Caco-2 (cell line): ENCODE measurements at regions of chr7 and their contacts with region 1.

Region 1: GRCh38 chr7:70693686-70694360 is 438.1 kb upstream of the GALNT17 start:
- DNase-seq: peak; percentile 82 to 84
- H3K4me3 ChIP-seq: peak overlapping the region; percentile 66
- H3K4me3 Mint-ChIP-seq: peak overlapping the region; percentile 85
- H3K27ac Mint-ChIP-seq: peak overlapping the region; percentile 48
- H3K4me1 ChIP-seq: peaks cover 8% of the 10 kb centered on the region; the same call in 1 of the 2 replicates
- H3K4me1 Mint-ChIP-seq: peaks cover 6% of the 10 kb centered on the region
- H3K27me3 ChIP-seq: no peaks in the 10 kb centered on the region
- H3K27me3 Mint-ChIP-seq: no peaks in the 10 kb centered on the region
- CTCF ChIP-seq: no peak

Region 2: GRCh38 chr7:70040970-70041766 is 652.7 kb before region 1 on chr7:
- CTCF ChIA-PET with region 1: interaction called, 6 read pairs
- POLR2A ChIA-PET with region 1: no interaction called
- intact Hi-C with region 1: loop called (anchors 1 kb)
- DNase-seq: no peak
- H3K4me3 ChIP-seq: no peak overlapping the region
- H3K4me3 Mint-ChIP-seq: no peak overlapping the region
- H3K27ac Mint-ChIP-seq: no peak overlapping the region
- H3K4me1 ChIP-seq: no peaks in the 10 kb centered on the region
- H3K4me1 Mint-ChIP-seq: no peaks in the 10 kb centered on the region
- H3K27me3 ChIP-seq: no peaks in the 10 kb centered on the region
- H3K27me3 Mint-ChIP-seq: peaks cover 5% of the 10 kb centered on the region
- CTCF ChIP-seq: peak in 1 of 2 experiments; percentile 32

Region 3: GRCh38 chr7:70193514-70193913 is 500.3 kb before region 1 on chr7:
- CTCF ChIA-PET with region 1: no interaction called
- POLR2A ChIA-PET with region 1: no interaction called
- intact Hi-C with region 1: loop called (anchors 1 kb)
- DNase-seq: no peak
- H3K4me3 ChIP-seq: no peak overlapping the region
- H3K4me3 Mint-ChIP-seq: no peak overlapping the region
- H3K27ac Mint-ChIP-seq: no peak overlapping the region
- H3K4me1 ChIP-seq: no peaks in the 10 kb centered on the region
- H3K4me1 Mint-ChIP-seq: no peaks in the 10 kb centered on the region
- H3K27me3 ChIP-seq: no peaks in the 10 kb centered on the region
- H3K27me3 Mint-ChIP-seq: no peaks in the 10 kb centered on the region
- CTCF ChIP-seq: peak in 1 of 2 experiments; percentile 19

Region 4: DNA sequence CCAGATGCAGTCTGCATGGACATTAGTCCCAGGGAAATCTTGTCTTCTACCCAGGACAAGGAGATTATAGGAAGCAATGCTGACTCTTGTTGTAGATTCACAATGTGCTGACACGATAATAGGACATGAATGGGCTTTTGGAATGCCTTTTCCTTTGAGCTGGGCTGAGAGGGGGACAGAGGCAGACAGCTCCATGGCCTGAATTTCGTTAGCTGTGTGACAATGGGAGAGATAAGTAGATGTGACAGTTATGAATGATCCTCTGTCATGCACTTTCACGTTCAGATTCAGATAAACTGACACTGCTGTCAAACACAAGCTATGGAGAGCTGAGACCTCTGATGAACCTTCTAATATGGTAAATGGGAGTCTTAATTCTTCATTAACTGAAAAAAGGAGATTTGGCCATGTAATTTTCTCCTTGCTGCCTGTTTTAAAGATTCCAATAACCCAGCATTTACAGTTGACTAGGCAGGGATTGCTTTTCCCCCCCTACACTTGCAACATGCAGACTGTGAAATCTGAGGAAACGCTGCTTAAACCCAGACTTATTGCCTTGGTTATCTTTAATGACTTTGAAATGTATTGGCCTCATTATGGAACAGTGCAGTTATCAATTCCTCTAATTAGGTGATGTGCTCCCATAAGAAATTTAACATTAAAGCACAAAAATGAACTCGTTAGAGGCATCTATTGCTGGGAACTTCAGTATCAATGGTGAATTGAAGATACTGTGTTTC is 426.3 kb before region 1 on chr7:
- CTCF ChIA-PET with region 1: no interaction called
- POLR2A ChIA-PET with region 1: no interaction called
- intact Hi-C with region 1: loop called (anchors 5 kb)
- DNase-seq: no peak
- H3K4me3 ChIP-seq: no peak overlapping the region
- H3K4me3 Mint-ChIP-seq: no peak overlapping the region
- H3K27ac Mint-ChIP-seq: no peak overlapping the region
- H3K4me1 ChIP-seq: peaks cover 13% of the 10 kb centered on the region; the same call in 1 of the 2 replicates
- H3K4me1 Mint-ChIP-seq: peaks cover 12% of the 10 kb centered on the region
- H3K27me3 ChIP-seq: no peaks in the 10 kb centered on the region
- H3K27me3 Mint-ChIP-seq: no peaks in the 10 kb centered on the region
- CTCF ChIP-seq: no peak

Region 5: GRCh38 chr7:70520611-70521010 is 173.2 kb before region 1 on chr7:
- CTCF ChIA-PET with region 1: interaction called, 6 read pairs
- POLR2A ChIA-PET with region 1: no interaction called
- intact Hi-C with region 1: loop called (anchors 5 kb)
- DNase-seq: no peak
- H3K4me3 ChIP-seq: no peak overlapping the region
- H3K4me3 Mint-ChIP-seq: peak overlapping the region; percentile 40
- H3K27ac Mint-ChIP-seq: peak overlapping the region; percentile 31
- H3K4me1 ChIP-seq: peaks cover 37% of the 10 kb centered on the region
- H3K4me1 Mint-ChIP-seq: peaks cover 15% of the 10 kb centered on the region
- H3K27me3 ChIP-seq: no peaks in the 10 kb centered on the region
- H3K27me3 Mint-ChIP-seq: no peaks in the 10 kb centered on the region
- CTCF ChIP-seq: no peak

Region 6: DNA sequence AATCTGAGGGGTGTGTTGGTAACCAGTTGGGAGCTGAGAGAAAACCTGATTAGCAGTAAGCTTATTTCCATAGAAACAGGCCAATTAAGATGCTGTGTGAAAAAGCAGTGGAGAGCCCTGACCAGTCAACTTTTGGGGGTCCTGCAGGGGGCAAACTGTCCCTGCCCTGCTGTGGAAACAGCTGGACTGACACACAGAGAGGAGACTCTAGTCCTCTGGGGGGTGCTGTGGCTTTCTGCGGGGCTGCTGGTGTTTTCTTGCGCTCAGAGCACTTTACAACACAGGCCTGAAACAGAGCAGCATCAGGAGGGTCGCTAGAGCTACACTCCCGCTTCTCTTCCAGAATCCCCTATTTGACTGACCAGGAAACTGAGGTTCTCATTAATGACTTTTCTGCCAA is 108.8 kb before region 1 on chr7:
- CTCF ChIA-PET with region 1: interaction called, 4 read pairs
- POLR2A ChIA-PET with region 1: no interaction called
- intact Hi-C with region 1: loop called (anchors 2 kb)
- DNase-seq: no peak
- H3K4me3 ChIP-seq: no peak overlapping the region
- H3K4me3 Mint-ChIP-seq: no peak overlapping the region
- H3K27ac Mint-ChIP-seq: no peak overlapping the region
- H3K4me1 ChIP-seq: peaks cover 10% of the 10 kb centered on the region
- H3K4me1 Mint-ChIP-seq: peaks cover 16% of the 10 kb centered on the region
- H3K27me3 ChIP-seq: no peaks in the 10 kb centered on the region
- H3K27me3 Mint-ChIP-seq: no peaks in the 10 kb centered on the region
- CTCF ChIP-seq: no peak

Region 7: DNA sequence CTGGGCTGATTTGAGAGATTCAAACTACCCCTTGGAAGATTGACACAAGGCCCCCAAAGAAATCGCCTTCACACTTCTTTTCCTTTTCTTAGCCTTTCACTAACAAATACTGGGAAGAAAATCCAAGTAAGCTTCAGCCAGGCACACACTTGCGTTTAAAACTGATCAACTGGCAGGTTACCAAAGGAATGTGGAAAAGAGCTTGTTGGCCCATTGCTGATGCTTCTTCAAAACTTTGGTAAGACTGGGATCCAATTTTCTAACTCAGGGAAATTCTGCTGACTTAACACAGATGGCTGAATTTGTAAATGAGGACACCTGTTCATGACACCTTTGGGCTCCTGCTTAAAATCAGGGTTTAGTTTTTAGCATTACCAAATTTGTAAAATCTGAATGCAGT is 26.4 kb before region 1 on chr7:
- CTCF ChIA-PET with region 1: no interaction called
- POLR2A ChIA-PET with region 1: no interaction called
- intact Hi-C with region 1: no loop called
- DNase-seq: no peak
- H3K4me3 ChIP-seq: no peak overlapping the region
- H3K4me3 Mint-ChIP-seq: no peak overlapping the region
- H3K27ac Mint-ChIP-seq: no peak overlapping the region
- H3K4me1 ChIP-seq: no peaks in the 10 kb centered on the region
- H3K4me1 Mint-ChIP-seq: peaks cover 6% of the 10 kb centered on the region
- H3K27me3 ChIP-seq: no peaks in the 10 kb centered on the region
- H3K27me3 Mint-ChIP-seq: no peaks in the 10 kb centered on the region
- CTCF ChIP-seq: no peak